ENCODE measurements at regions of chr2 and their contacts with region 1.

Region 1: GRCh38 chr2:120174963-120175581 is 48.1 kb downstream of the TMEM185B start:
- DNase-seq: peak in 3 of 9 experiments; percentile 26 to 78 (median 70)
- ATAC-seq: no peak
- H3K4me3 ChIP-seq: no peak overlapping the region
- H3K4me3 Mint-ChIP-seq: no peak overlapping the region
- H3K27ac ChIP-seq: peak overlapping the region in 1 of 2 experiments; percentile 1
- H3K27ac Mint-ChIP-seq: peak overlapping the region; percentile 80
- H3K4me1 ChIP-seq: peaks cover 46% of the 10 kb centered on the region
- H3K4me1 Mint-ChIP-seq: peaks cover 49% of the 10 kb centered on the region
- H3K27me3 ChIP-seq: no peaks in the 10 kb centered on the region
- H3K27me3 Mint-ChIP-seq: no peaks in the 10 kb centered on the region
- CTCF ChIP-seq: peak; percentile 94

Region 2: GRCh38 chr2:119366649-119367471 is 808.2 kb before region 1 on chr2 and contains the starts of genes C2orf76 and DBI:
- CTCF ChIA-PET with region 1: no interaction called
- POLR2A ChIA-PET with region 1: no interaction called
- intact Hi-C with region 1: loop called in 1 of 2 experiments (anchors 2 kb)
- DNase-seq: peak; percentile 81 to 97 (median 90)
- ATAC-seq: peak; percentile 91
- H3K4me3 ChIP-seq: peak within 1 kb of the TSS; percentile 66 to 96
- H3K4me3 Mint-ChIP-seq: peak within 1 kb of the TSS; percentile 97
- H3K27ac ChIP-seq: peak within 1 kb of the TSS; percentile 68 to 92
- H3K27ac Mint-ChIP-seq: peak within 1 kb of the TSS; percentile 96
- H3K4me1 ChIP-seq: peaks cover 19% of the 10 kb centered on the region
- H3K4me1 Mint-ChIP-seq: peaks cover 61% of the 10 kb centered on the region
- H3K27me3 ChIP-seq: no peaks in the 10 kb centered on the region
- H3K27me3 Mint-ChIP-seq: no peaks in the 10 kb centered on the region
- CTCF ChIP-seq: no peak
- total RNA-seq, gene C2orf76: 5.2 to 5.8 TPM
- total RNA-seq, gene DBI: 33.9 to 35.6 TPM

Region 3: GRCh38 chr2:119702918-119703401 is 472.1 kb before region 1 on chr2:
- CTCF ChIA-PET with region 1: interaction called, 47 read pairs
- POLR2A ChIA-PET with region 1: interaction called, 6 read pairs
- intact Hi-C with region 1: loop called (anchors 1 to 2 kb)
- DNase-seq: peak; percentile 27 to 80 (median 71)
- ATAC-seq: peak; percentile 87
- H3K4me3 ChIP-seq: no peak overlapping the region
- H3K4me3 Mint-ChIP-seq: no peak overlapping the region
- H3K27ac ChIP-seq: no peak overlapping the region
- H3K27ac Mint-ChIP-seq: no peak overlapping the region
- H3K4me1 ChIP-seq: peaks cover 12% of the 10 kb centered on the region
- H3K4me1 Mint-ChIP-seq: peaks cover 12% of the 10 kb centered on the region
- H3K27me3 ChIP-seq: peaks cover 0 to 2% of the 10 kb centered on the region in 2 experiments
- H3K27me3 Mint-ChIP-seq: no peaks in the 10 kb centered on the region
- CTCF ChIP-seq: peak; percentile 92

Region 4: DNA sequence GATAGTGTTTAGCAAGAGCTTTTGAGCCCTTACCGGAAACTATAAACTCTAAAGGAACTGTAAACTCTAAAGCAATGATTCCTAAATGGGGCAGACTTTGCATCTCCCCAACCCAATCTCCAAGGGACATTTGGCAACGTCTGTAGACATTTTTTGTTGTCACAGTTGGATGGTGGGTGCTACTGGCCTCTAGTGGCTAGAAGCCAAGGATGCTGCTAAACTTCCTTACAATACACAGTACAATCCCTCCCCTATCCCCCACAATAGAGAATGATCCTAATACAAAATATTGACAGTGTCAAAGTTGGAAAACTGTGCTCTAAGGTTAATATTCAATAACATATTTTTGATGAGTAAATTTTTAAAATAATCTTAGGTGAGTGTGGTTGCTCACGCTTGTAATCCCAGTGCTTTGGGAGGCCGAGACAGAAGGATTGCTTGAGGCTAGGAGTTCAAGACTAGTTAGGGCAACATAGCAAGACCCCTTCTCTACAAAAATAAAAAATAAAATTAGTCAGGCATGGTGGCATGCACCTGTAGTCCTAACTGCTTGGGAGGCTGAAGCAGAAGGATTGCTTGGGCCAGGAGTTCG is 348.6 kb before region 1 on chr2:
- CTCF ChIA-PET with region 1: interaction called, 7 read pairs
- POLR2A ChIA-PET with region 1: no interaction called
- intact Hi-C with region 1: loop called in 1 of 2 experiments (anchors 2 kb)
- DNase-seq: peak in 5 of 9 experiments; percentile 39 to 71 (median 48)
- ATAC-seq: peak; percentile 72
- H3K4me3 ChIP-seq: no peak overlapping the region
- H3K4me3 Mint-ChIP-seq: no peak overlapping the region
- H3K27ac ChIP-seq: no peak overlapping the region
- H3K27ac Mint-ChIP-seq: no peak overlapping the region
- H3K4me1 ChIP-seq: peaks cover 6% of the 10 kb centered on the region
- H3K4me1 Mint-ChIP-seq: peaks cover 56% of the 10 kb centered on the region
- H3K27me3 ChIP-seq: no peaks in the 10 kb centered on the region
- H3K27me3 Mint-ChIP-seq: no peaks in the 10 kb centered on the region
- CTCF ChIP-seq: peak; percentile 73

Region 5: DNA sequence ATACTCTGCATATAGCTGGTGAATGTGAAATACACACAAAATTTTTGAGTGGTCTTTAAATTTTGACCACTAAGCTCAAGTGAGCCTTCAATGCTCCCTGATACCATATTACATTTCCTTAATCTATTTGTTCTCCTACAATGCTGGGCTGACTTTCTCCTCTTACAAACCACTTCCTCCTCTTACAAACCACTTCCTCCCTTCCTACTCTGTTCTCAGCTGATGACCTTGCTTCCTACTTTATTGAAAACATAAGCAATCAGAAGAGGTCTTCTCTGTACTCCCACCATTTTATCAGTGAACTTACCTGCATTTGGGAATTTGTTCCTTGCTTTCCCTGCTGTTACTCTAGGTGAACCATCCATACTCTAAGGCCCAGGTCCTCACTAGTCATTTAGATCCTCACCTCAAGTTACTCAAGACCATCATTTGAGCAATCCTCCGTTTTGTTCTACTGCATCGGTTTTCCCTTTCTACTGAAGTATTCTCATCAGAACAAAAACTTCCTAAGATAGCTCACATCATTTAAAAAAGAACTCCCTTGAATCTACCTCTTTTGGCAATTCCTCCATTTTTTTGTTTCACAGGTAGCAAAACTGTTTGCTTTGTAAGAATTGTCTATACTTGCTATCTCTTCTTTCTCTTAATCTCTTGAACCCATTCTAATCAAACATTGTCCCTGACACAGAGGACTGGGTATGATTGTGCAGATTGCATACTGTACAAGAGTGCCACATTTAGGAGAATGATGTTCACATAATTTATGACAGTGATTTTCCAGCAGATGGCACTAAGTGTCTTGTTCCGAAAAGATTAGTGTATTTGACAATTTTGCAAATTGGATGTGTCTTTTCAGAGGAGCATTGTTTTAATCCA is 65.6 kb before region 1 on chr2:
- CTCF ChIA-PET with region 1: interaction called, 73 read pairs
- POLR2A ChIA-PET with region 1: interaction called, 16 read pairs
- intact Hi-C with region 1: loop called (anchors 1 to 2 kb)
- DNase-seq: peak in 2 of 9 experiments; percentile 37 to 68
- ATAC-seq: peak; percentile 73
- H3K4me3 ChIP-seq: peak overlapping the region in 1 of 2 experiments; percentile 12
- H3K4me3 Mint-ChIP-seq: peak overlapping the region; percentile 72
- H3K27ac ChIP-seq: peak overlapping the region; percentile 1 to 33
- H3K27ac Mint-ChIP-seq: peak overlapping the region; percentile 81
- H3K4me1 ChIP-seq: peaks cover 21% of the 10 kb centered on the region
- H3K4me1 Mint-ChIP-seq: peaks cover 30% of the 10 kb centered on the region
- H3K27me3 ChIP-seq: no peaks in the 10 kb centered on the region
- H3K27me3 Mint-ChIP-seq: no peaks in the 10 kb centered on the region
- CTCF ChIP-seq: peak; percentile 66

Region 6: DNA sequence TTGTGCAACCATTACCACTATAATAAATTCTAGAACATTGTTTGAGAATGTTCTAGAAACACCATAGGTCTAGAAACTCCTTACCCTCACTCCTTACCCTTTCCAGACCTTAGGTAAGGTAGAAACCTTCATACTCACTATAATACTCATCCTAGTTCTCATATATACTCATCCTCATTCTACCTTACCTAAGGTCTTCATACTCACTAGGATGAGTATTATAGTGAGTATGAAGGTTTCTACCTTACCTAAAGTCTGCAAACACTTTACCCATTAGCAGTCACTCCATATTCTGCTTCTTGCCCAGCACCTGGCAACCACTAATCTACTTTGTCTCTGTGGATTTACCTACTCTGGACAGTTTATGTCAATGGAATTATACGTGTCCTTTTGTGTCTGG is 26.8 kb before region 1 on chr2:
- CTCF ChIA-PET with region 1: no interaction called
- POLR2A ChIA-PET with region 1: no interaction called
- intact Hi-C with region 1: no loop called
- DNase-seq: no peak
- ATAC-seq: no peak
- H3K4me3 ChIP-seq: no peak overlapping the region
- H3K4me3 Mint-ChIP-seq: no peak overlapping the region
- H3K27ac ChIP-seq: no peak overlapping the region
- H3K27ac Mint-ChIP-seq: no peak overlapping the region
- H3K4me1 ChIP-seq: no peaks in the 10 kb centered on the region
- H3K4me1 Mint-ChIP-seq: no peaks in the 10 kb centered on the region
- H3K27me3 ChIP-seq: no peaks in the 10 kb centered on the region
- H3K27me3 Mint-ChIP-seq: no peaks in the 10 kb centered on the region
- CTCF ChIP-seq: no peak

Region 7: DNA sequence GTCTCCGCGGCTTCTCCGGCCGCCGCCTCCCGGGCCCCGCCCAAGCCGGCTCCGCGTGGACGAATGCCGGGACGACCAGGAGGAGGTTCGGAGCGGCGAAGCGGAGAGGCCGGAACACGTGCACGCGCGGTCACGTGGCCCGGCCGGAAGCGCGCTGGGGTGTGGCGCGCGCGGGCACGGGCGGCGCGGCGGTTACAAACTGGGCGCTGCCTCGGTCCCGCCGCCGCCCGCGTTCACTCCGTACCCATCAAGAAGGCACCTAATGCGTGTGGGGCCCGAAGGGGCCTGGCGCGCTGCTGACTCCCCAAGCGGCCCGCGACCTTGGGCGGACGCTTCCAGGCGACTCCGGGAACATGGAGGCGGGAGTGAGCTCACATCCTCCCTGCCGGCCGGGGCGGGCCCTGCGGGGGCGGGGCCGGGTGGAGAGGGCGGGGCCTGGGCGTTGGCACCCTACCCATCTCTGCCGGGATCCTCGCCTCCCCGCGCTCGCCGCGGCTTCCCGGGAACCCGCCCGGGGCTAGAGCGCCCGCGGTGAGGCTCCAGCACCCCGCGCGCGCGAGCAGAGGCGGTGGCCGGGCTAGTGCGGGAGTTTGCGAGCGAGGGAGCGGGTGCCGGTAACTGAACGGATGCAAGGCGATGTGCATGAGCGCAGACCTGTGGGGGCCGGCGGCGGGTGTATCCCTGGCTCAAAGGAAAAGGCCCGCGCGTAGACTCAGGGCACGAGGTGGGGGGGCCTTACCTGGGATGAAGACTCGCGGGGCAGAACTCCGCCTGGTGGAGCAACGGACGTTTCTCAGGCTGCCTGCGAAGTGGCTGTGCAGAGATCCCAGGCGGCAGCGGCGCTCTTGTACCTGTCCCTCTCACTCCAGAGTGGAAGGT is 48.2 kb after region 1 on chr2 and contains the start of gene TMEM185B:
- CTCF ChIA-PET with region 1: interaction called, 8 read pairs
- POLR2A ChIA-PET with region 1: interaction called, 6 read pairs
- intact Hi-C with region 1: loop called (anchors 1 kb)
- DNase-seq: peak; percentile 81 to 91 (median 87)
- ATAC-seq: peak; percentile 95
- H3K4me3 ChIP-seq: peak within 1 kb of the TSS; percentile 80 to 87
- H3K4me3 Mint-ChIP-seq: peak within 1 kb of the TSS; percentile 87
- H3K27ac ChIP-seq: peak within 1 kb of the TSS; percentile 90 to 95
- H3K27ac Mint-ChIP-seq: peak within 1 kb of the TSS; percentile 93
- H3K4me1 ChIP-seq: peaks cover 36% of the 10 kb centered on the region
- H3K4me1 Mint-ChIP-seq: peaks cover 60% of the 10 kb centered on the region
- H3K27me3 ChIP-seq: no peaks in the 10 kb centered on the region
- H3K27me3 Mint-ChIP-seq: no peaks in the 10 kb centered on the region
- CTCF ChIP-seq: no peak
- total RNA-seq, gene TMEM185B: 21.3 to 23.5 TPM

Region 8: DNA sequence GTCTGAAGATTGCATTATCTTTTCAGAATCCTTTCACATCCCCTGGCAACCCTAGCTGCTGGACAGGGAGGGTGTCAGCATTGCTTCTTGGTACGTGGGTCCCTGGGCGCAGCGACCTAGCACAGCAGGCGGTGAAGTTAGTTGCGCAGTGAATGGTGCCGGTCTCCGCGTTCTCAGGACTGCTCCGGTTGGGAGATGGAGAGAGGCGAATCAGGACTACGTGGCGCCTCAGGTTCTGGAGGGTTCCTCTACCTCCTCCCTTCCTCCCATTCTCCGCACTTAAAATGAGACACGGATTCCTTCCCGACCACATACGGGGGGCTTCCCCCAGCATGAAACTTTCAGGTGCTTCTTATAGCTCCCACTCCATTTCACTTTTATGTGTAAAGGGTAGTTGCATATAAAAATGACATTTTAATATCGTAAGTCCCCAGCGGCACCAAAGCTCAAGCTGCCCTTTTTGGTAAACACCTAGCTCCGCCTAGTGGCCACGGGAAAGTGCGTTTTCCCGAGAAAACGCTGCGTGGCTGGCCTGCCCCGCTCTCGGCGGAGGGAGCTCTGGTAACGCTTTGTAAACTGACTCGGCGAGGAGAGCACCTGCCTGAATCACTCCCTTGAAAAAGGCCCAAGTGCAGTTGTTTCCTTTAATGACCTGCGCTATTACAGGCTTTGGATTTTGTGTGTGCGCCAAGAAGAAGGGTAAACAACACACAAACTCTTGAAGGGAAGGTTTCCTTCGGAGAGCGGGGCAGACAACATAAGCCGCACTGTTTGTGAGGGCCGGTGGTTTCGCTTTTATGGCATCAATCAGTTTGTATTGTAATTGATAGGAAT is 138.0 kb after region 1 on chr2:
- CTCF ChIA-PET with region 1: interaction called, 15 read pairs
- POLR2A ChIA-PET with region 1: interaction called, 6 read pairs
- intact Hi-C with region 1: loop called in 1 of 2 experiments (anchors 1 kb)
- DNase-seq: peak; percentile 45 to 82 (median 72)
- ATAC-seq: peak; percentile 76
- H3K4me3 ChIP-seq: peak overlapping the region; percentile 41 to 43
- H3K4me3 Mint-ChIP-seq: peak overlapping the region; percentile 73
- H3K27ac ChIP-seq: no peak overlapping the region
- H3K27ac Mint-ChIP-seq: peak overlapping the region; percentile 18
- H3K4me1 ChIP-seq: peaks cover 27% of the 10 kb centered on the region
- H3K4me1 Mint-ChIP-seq: peaks cover 28% of the 10 kb centered on the region
- H3K27me3 ChIP-seq: peaks cover 0 to 2% of the 10 kb centered on the region in 2 experiments
- H3K27me3 Mint-ChIP-seq: peaks cover 2% of the 10 kb centered on the region
- CTCF ChIP-seq: peak; percentile 61

Region 9: DNA sequence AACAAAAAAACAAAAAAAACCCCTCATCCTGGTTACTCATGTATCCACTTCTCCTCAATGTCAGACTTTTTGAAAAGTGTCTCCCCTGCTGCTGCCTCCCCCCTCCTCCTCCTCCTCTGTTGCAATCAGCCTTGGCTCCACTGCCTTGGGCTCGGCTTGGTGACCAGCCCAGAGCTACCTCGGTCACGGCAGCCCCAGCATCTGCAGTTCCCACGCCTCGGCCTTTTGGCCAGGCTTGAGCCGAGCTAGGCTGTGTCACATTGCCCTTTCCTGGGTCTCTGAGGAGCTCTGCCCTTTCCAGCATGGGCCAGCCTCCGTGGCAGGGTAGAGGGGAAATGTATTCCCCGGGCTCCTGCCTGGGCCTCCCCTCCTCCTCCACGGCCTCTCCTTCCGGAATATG is 148.1 kb after region 1 on chr2:
- CTCF ChIA-PET with region 1: no interaction called
- POLR2A ChIA-PET with region 1: no interaction called
- intact Hi-C with region 1: no loop called
- DNase-seq: no peak
- ATAC-seq: no peak
- H3K4me3 ChIP-seq: no peak overlapping the region
- H3K4me3 Mint-ChIP-seq: no peak overlapping the region
- H3K27ac ChIP-seq: no peak overlapping the region
- H3K27ac Mint-ChIP-seq: no peak overlapping the region
- H3K4me1 ChIP-seq: peaks cover 6% of the 10 kb centered on the region
- H3K4me1 Mint-ChIP-seq: peaks cover 10% of the 10 kb centered on the region
- H3K27me3 ChIP-seq: no peaks in the 10 kb centered on the region
- H3K27me3 Mint-ChIP-seq: peaks cover 2% of the 10 kb centered on the region
- CTCF ChIP-seq: no peak

Region 10: GRCh38 chr2:120343433-120344105 is 168.5 kb after region 1 on chr2:
- CTCF ChIA-PET with region 1: no interaction called
- POLR2A ChIA-PET with region 1: no interaction called
- intact Hi-C with region 1: no loop called
- DNase-seq: peak; percentile 9 to 66 (median 47)
- ATAC-seq: peak; percentile 45
- H3K4me3 ChIP-seq: no peak overlapping the region
- H3K4me3 Mint-ChIP-seq: peak overlapping the region; percentile 73
- H3K27ac ChIP-seq: no peak overlapping the region
- H3K27ac Mint-ChIP-seq: no peak overlapping the region
- H3K4me1 ChIP-seq: peaks cover 20% of the 10 kb centered on the region
- H3K4me1 Mint-ChIP-seq: peaks cover 25% of the 10 kb centered on the region
- H3K27me3 ChIP-seq: peaks cover 22 to 28% of the 10 kb centered on the region in 2 experiments
- H3K27me3 Mint-ChIP-seq: peaks cover 56% of the 10 kb centered on the region
- CTCF ChIP-seq: peak; percentile 44

Region 11: GRCh38 chr2:120503793-120504571 is 328.9 kb after region 1 on chr2:
- CTCF ChIA-PET with region 1: no interaction called
- POLR2A ChIA-PET with region 1: no interaction called
- intact Hi-C with region 1: no loop called
- DNase-seq: no peak
- ATAC-seq: no peak
- H3K4me3 ChIP-seq: no peak overlapping the region
- H3K4me3 Mint-ChIP-seq: no peak overlapping the region
- H3K27ac ChIP-seq: no peak overlapping the region
- H3K27ac Mint-ChIP-seq: no peak overlapping the region
- H3K4me1 ChIP-seq: no peaks in the 10 kb centered on the region
- H3K4me1 Mint-ChIP-seq: no peaks in the 10 kb centered on the region
- H3K27me3 ChIP-seq: no peaks in the 10 kb centered on the region
- H3K27me3 Mint-ChIP-seq: no peaks in the 10 kb centered on the region
- CTCF ChIP-seq: no peak

Measured in CD8-positive, alpha-beta T cell (primary cell).